Caco-2 (cell line): ENCODE measurements at regions of chr18 and their contacts with region 1.

Region 1: GRCh38 chr18:35497370-35498197 is at the start of gene INO80C:
- DNase-seq: peak; percentile 83 to 84
- H3K4me3 ChIP-seq: peak within 1 kb of the TSS; percentile 39
- H3K4me3 Mint-ChIP-seq: peak within 1 kb of the TSS; percentile 89
- H3K27ac Mint-ChIP-seq: peak within 1 kb of the TSS; percentile 96
- H3K4me1 ChIP-seq: peaks cover 14% of the 10 kb centered on the region; the same call in 1 of the 2 replicates
- H3K4me1 Mint-ChIP-seq: no peaks in the 10 kb centered on the region
- H3K27me3 ChIP-seq: no peaks in the 10 kb centered on the region
- H3K27me3 Mint-ChIP-seq: no peaks in the 10 kb centered on the region
- CTCF ChIP-seq: no peak
- total RNA-seq, gene INO80C: 22.7 and 26.6 TPM in 2 replicates

Region 2: GRCh38 chr18:35459005-35459441 is 38.6 kb before region 1 on chr18:
- CTCF ChIA-PET with region 1: no interaction called
- POLR2A ChIA-PET with region 1: no interaction called
- intact Hi-C with region 1: loop called (anchors 2 kb)
- DNase-seq: peak; percentile 77 to 88
- H3K4me3 ChIP-seq: no peak overlapping the region
- H3K4me3 Mint-ChIP-seq: peak overlapping the region; percentile 29
- H3K27ac Mint-ChIP-seq: peak overlapping the region; percentile 75
- H3K4me1 ChIP-seq: peaks cover 25% of the 10 kb centered on the region
- H3K4me1 Mint-ChIP-seq: peaks cover 20% of the 10 kb centered on the region
- H3K27me3 ChIP-seq: no peaks in the 10 kb centered on the region
- H3K27me3 Mint-ChIP-seq: no peaks in the 10 kb centered on the region
- CTCF ChIP-seq: no peak

Region 3: DNA sequence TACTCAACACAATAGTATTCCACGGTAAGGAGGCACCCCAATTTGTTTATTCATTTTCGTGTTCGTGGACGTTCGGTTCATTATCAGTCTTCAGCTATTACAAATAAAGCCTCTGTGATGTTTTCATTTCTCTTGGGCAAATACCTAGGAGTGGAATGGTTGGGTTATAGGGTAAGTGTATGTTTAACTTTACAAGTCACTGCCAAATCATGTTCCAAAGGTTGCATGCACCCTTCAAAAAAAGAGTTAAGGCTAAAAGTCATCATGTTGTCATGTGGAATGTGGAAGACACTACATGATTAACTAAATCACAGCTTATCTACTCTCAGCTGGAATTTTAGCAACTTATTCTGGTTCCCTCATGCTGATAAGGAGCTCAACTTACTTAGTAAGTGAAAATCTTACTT is 15.6 kb before region 1 on chr18:
- CTCF ChIA-PET with region 1: no interaction called
- POLR2A ChIA-PET with region 1: interaction called, 4 read pairs
- intact Hi-C with region 1: loop called (anchors 2 kb)
- DNase-seq: peak in 1 of 2 experiments; percentile 39
- H3K4me3 ChIP-seq: no peak overlapping the region
- H3K4me3 Mint-ChIP-seq: peak overlapping the region; percentile 30
- H3K27ac Mint-ChIP-seq: peak overlapping the region; percentile 89
- H3K4me1 ChIP-seq: peaks cover 44% of the 10 kb centered on the region
- H3K4me1 Mint-ChIP-seq: peaks cover 14% of the 10 kb centered on the region
- H3K27me3 ChIP-seq: no peaks in the 10 kb centered on the region
- H3K27me3 Mint-ChIP-seq: no peaks in the 10 kb centered on the region
- CTCF ChIP-seq: no peak

Region 4: DNA sequence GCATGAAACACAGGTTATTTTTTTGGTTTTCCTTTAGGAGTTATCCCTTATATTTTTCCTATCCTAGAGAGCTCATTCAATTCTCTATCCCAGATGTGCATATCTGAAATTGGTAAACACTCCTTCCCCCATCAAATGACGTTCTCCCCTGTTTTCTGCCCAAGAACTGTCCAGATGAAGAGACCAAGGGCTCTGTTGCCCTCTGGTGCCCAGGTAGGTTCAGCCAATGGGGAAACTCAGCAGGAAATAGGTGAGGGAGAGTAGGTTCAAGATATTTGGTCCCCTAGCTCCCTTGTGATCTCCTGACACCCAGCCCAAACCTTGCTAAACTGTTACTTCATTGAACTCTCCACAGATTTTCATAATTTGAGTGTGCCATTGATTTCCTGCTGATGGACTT is 14.2 kb after region 1 on chr18:
- CTCF ChIA-PET with region 1: no interaction called
- POLR2A ChIA-PET with region 1: interaction called, 13 read pairs
- intact Hi-C with region 1: no loop called
- DNase-seq: no peak
- H3K4me3 ChIP-seq: no peak overlapping the region
- H3K4me3 Mint-ChIP-seq: no peak overlapping the region
- H3K27ac Mint-ChIP-seq: no peak overlapping the region
- H3K4me1 ChIP-seq: peaks cover 19% of the 10 kb centered on the region
- H3K4me1 Mint-ChIP-seq: no peaks in the 10 kb centered on the region
- H3K27me3 ChIP-seq: no peaks in the 10 kb centered on the region
- H3K27me3 Mint-ChIP-seq: no peaks in the 10 kb centered on the region
- CTCF ChIP-seq: peak in 1 of 2 experiments; percentile 9